ENCODE measurements at regions of chrX and their contacts with region 1.

Region 1: DNA sequence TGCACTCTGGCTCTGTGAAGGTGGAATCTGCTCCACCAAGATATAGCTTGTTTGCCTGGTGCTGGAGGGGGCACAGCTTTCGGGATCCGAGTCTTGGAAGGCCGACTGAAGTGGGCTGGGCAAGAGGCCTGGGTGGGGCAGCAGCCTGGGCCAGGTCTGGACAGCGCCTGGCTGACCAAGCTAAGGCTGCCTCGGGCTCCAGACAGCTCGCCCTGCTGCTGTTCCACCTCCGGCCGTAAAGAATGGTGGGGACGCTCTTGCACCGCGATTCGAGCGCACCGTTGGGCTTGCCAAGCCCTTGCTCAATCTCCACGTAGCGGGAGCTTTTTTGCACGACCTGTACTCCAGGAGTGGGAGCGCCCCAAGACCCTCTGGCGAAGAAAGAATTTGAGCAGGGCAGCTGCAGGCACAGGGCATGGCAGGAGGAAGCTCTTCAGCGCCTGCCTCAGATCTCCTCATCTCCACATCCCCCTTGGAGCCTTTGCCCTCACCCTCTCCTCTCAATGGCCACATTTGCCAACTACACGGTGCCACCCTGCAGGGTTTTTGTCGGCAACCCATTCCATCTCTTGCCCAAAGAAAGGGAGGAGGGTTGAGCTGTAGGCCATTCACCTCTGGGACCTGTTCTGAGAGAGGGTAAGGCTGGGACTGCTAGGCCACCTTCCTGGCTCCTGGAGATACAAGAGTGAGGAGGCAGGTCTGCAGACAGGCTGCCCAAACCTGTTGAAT is 18.9 kb downstream of the CNGA2 start:
- DNase-seq: no peak
- ATAC-seq: no peak
- H3K4me3 Mint-ChIP-seq: no peak overlapping the region
- H3K27ac Mint-ChIP-seq: no peak overlapping the region
- H3K4me1 Mint-ChIP-seq: no peaks in the 10 kb centered on the region
- H3K27me3 Mint-ChIP-seq: no peaks in the 10 kb centered on the region
- CTCF ChIP-seq: no peak

Region 2: GRCh38 chrX:152117305-152117704 is 363.8 kb after region 1 on chrX:
- CTCF ChIA-PET with region 1: no interaction called
- POLR2A ChIA-PET with region 1: no interaction called
- intact Hi-C with region 1: no loop called
- DNase-seq: no peak
- ATAC-seq: no peak
- H3K4me3 Mint-ChIP-seq: no peak overlapping the region
- H3K27ac Mint-ChIP-seq: no peak overlapping the region
- H3K4me1 Mint-ChIP-seq: no peaks in the 10 kb centered on the region
- H3K27me3 Mint-ChIP-seq: no peaks in the 10 kb centered on the region
- CTCF ChIP-seq: no peak

Region 3: GRCh38 chrX:152632445-152633097 is 879.1 kb after region 1 on chrX:
- CTCF ChIA-PET with region 1: no interaction called
- POLR2A ChIA-PET with region 1: no interaction called
- intact Hi-C with region 1: loop called (anchors 5 kb)
- DNase-seq: no peak
- ATAC-seq: no peak
- H3K4me3 Mint-ChIP-seq: no peak overlapping the region
- H3K27ac Mint-ChIP-seq: no peak overlapping the region
- H3K4me1 Mint-ChIP-seq: no peaks in the 10 kb centered on the region
- H3K27me3 Mint-ChIP-seq: peaks cover 7% of the 10 kb centered on the region
- CTCF ChIP-seq: no peak

Measured in activated B cell treated with CpG ODN at 0.5 μM for 24 hours (primary cell).